WTC11 (cell line): ENCODE measurements at regions of chr1 and their contacts with region 1.

Region 1: DNA sequence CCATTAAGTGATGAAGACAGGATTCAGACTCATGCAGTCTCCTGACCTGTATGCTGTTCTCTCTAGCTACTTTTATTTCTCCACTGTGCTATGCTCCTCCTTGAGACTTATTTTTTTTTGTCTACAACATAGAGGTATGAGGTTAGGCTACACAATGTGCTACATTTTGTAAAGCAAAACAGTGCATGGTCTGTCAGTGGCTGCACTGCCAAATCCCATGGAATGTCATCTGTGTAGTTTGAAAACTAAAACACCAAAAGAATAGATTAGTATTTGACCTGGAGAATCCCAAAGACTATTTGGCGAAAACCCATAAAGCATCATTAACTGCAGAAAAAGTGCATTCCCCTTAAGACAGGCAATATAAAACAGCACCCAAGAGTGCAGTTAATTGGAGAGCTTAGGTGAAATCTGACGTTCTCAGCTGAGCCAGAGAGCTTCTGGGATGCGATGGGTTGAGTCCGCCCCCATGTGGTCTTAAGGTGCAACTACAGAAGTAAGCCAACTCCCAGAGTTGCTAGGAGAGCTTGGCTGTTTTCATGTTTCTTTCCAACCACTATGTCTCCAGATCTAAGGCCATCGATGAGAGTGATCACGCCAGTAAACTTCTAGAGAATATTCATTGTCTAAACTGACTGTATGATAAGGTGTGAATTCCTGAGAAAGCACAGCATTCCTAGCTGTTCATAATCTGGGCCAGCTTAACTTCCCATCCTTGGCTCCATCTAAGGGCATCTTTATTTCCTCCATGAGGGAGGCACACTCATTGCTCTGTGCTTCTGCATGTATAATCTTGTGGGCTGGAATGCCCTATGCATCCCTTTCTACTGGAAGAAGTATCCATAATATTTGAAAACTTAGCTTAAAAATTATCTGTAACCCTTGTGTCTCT is 20.7 kb upstream of the CYP2J2 start:
- DNase-seq: peak; percentile 58
- ATAC-seq: peak; percentile 97
- H3K4me3 Mint-ChIP-seq: no peak overlapping the region
- H3K27ac Mint-ChIP-seq: no peak overlapping the region
- H3K4me1 Mint-ChIP-seq: no peaks in the 10 kb centered on the region
- H3K27me3 Mint-ChIP-seq: no peaks in the 10 kb centered on the region
- CTCF ChIP-seq: peak; percentile 87

Region 2: GRCh38 chr1:59779949-59780348 is 167.3 kb before region 1 on chr1:
- CTCF ChIA-PET with region 1: interaction called, 14 read pairs
- POLR2A ChIA-PET with region 1: no interaction called
- DNase-seq: peak; percentile 14
- ATAC-seq: peak; percentile 74
- H3K4me3 Mint-ChIP-seq: no peak overlapping the region
- H3K27ac Mint-ChIP-seq: no peak overlapping the region
- H3K4me1 Mint-ChIP-seq: no peaks in the 10 kb centered on the region
- H3K27me3 Mint-ChIP-seq: no peaks in the 10 kb centered on the region
- CTCF ChIP-seq: no peak

Region 3: DNA sequence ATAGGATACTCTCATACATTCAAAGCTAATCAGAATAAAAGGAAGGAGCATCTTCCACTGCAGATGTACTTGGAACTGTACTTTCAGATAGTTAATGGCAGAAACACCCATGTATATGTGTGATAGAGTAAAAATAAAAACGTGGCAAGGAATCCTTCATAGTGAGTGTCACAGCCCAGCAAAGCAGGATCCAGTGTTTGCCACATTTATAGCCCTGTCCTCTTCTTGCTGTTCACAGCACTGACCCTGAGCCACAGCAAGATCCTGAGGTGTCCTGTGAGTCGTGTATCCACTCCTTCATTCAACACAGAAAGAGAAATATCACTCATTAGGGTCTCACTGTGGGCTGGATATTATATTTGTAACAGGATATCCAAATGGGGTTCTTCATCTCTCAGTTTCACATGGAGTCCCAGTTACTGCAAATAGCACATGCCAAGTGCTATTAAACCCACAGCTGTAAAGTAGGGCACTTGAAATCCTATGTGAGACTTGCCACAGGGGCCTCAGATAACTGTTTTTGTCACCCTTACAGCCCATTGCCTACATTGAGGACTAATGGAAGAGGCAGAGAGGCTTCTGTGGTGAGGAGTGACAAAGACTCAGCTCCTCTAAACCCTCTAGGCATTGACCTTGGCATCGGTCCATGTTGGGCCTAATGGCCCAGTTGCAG is 62.0 kb before region 1 on chr1:
- CTCF ChIA-PET with region 1: interaction called, 156 read pairs
- POLR2A ChIA-PET with region 1: interaction called, 7 read pairs
- DNase-seq: no peak
- ATAC-seq: no peak
- H3K4me3 Mint-ChIP-seq: no peak overlapping the region
- H3K27ac Mint-ChIP-seq: no peak overlapping the region
- H3K4me1 Mint-ChIP-seq: no peaks in the 10 kb centered on the region
- H3K27me3 Mint-ChIP-seq: no peaks in the 10 kb centered on the region; the same call in 1 of the 2 replicates
- CTCF ChIP-seq: no peak

Region 4: GRCh38 chr1:59903141-59903754 is 44.0 kb before region 1 on chr1:
- CTCF ChIA-PET with region 1: interaction called, 32 read pairs
- POLR2A ChIA-PET with region 1: no interaction called
- DNase-seq: peak; percentile 34
- ATAC-seq: peak; percentile 79
- H3K4me3 Mint-ChIP-seq: no peak overlapping the region
- H3K27ac Mint-ChIP-seq: no peak overlapping the region
- H3K4me1 Mint-ChIP-seq: peaks cover 7% of the 10 kb centered on the region
- H3K27me3 Mint-ChIP-seq: no peaks in the 10 kb centered on the region
- CTCF ChIP-seq: peak; percentile 46; the same call in 1 of the 2 replicates

Region 5: GRCh38 chr1:59936358-59936821 is 10.9 kb before region 1 on chr1:
- CTCF ChIA-PET with region 1: interaction called, 11 read pairs
- POLR2A ChIA-PET with region 1: no interaction called
- DNase-seq: no peak
- ATAC-seq: no peak
- H3K4me3 Mint-ChIP-seq: no peak overlapping the region
- H3K27ac Mint-ChIP-seq: no peak overlapping the region
- H3K4me1 Mint-ChIP-seq: no peaks in the 10 kb centered on the region
- H3K27me3 Mint-ChIP-seq: no peaks in the 10 kb centered on the region; the same call in 1 of the 2 replicates
- CTCF ChIP-seq: no peak

Region 6: GRCh38 chr1:60068393-60069045 is 121.2 kb after region 1 on chr1:
- CTCF ChIA-PET with region 1: no interaction called
- POLR2A ChIA-PET with region 1: no interaction called
- DNase-seq: no peak
- ATAC-seq: no peak
- H3K4me3 Mint-ChIP-seq: no peak overlapping the region
- H3K27ac Mint-ChIP-seq: no peak overlapping the region
- H3K4me1 Mint-ChIP-seq: 0 out of 2 replicates have a peak, but pooled peaks cover 3% of the 10 kb centered on the region
- H3K27me3 Mint-ChIP-seq: peaks cover 24% of the 10 kb centered on the region
- CTCF ChIP-seq: no peak